ENCODE measurements at regions of chr7 and their contacts with region 1.

Region 1: GRCh38 chr7:25851332-25852210 is 300.4 kb upstream of the NFE2L3 start:
- DNase-seq: peak; percentile 96
- H3K4me3 Mint-ChIP-seq: peak overlapping the region; percentile 57
- H3K27ac Mint-ChIP-seq: peak overlapping the region; percentile 3
- H3K4me1 Mint-ChIP-seq: peaks cover 55% of the 10 kb centered on the region
- H3K27me3 Mint-ChIP-seq: peaks cover 28% of the 10 kb centered on the region
- CTCF ChIP-seq: peak; percentile 96

Region 2: GRCh38 chr7:25259587-25260243 is 591.9 kb before region 1 on chr7:
- CTCF ChIA-PET with region 1: interaction called, 6 read pairs
- intact Hi-C with region 1: loop called (anchors 1 kb)
- DNase-seq: peak; percentile 80
- H3K4me3 Mint-ChIP-seq: no peak overlapping the region
- H3K27ac Mint-ChIP-seq: no peak overlapping the region
- H3K4me1 Mint-ChIP-seq: peaks cover 37% of the 10 kb centered on the region
- H3K27me3 Mint-ChIP-seq: peaks cover 60% of the 10 kb centered on the region
- CTCF ChIP-seq: peak; percentile 93

Region 3: GRCh38 chr7:25565949-25566348 is 285.6 kb before region 1 on chr7:
- CTCF ChIA-PET with region 1: interaction called, 17 read pairs
- intact Hi-C with region 1: loop called (anchors 1 kb)
- DNase-seq: peak; percentile 70
- H3K4me3 Mint-ChIP-seq: no peak overlapping the region
- H3K27ac Mint-ChIP-seq: no peak overlapping the region
- H3K4me1 Mint-ChIP-seq: peaks cover 13% of the 10 kb centered on the region
- H3K27me3 Mint-ChIP-seq: peaks cover 43% of the 10 kb centered on the region
- CTCF ChIP-seq: peak; percentile 100

Region 4: DNA sequence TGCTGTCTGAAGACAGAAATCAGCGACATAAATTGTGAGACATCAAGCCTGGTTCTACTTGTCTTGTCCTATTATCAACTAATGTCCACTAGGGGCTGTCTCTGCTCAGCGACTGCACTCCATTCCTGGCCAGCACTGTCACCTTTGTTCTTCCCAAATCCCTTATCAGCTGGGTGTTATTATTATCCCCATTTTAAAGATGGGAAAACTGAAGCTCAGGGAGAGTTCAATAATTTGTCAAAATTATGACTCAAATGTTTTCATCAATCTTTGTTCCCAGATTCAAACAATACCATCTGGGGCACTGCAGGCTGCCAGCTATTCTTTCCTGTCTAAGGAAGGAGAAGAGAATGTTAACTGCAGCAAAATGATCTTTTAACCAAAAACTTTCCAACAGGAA is 131.1 kb before region 1 on chr7:
- CTCF ChIA-PET with region 1: interaction called, 8 read pairs
- intact Hi-C with region 1: loop called (anchors 1 kb)
- DNase-seq: no peak
- H3K4me3 Mint-ChIP-seq: no peak overlapping the region
- H3K27ac Mint-ChIP-seq: no peak overlapping the region
- H3K4me1 Mint-ChIP-seq: no peaks in the 10 kb centered on the region
- H3K27me3 Mint-ChIP-seq: peaks cover 47% of the 10 kb centered on the region
- CTCF ChIP-seq: peak; percentile 53

Region 5: DNA sequence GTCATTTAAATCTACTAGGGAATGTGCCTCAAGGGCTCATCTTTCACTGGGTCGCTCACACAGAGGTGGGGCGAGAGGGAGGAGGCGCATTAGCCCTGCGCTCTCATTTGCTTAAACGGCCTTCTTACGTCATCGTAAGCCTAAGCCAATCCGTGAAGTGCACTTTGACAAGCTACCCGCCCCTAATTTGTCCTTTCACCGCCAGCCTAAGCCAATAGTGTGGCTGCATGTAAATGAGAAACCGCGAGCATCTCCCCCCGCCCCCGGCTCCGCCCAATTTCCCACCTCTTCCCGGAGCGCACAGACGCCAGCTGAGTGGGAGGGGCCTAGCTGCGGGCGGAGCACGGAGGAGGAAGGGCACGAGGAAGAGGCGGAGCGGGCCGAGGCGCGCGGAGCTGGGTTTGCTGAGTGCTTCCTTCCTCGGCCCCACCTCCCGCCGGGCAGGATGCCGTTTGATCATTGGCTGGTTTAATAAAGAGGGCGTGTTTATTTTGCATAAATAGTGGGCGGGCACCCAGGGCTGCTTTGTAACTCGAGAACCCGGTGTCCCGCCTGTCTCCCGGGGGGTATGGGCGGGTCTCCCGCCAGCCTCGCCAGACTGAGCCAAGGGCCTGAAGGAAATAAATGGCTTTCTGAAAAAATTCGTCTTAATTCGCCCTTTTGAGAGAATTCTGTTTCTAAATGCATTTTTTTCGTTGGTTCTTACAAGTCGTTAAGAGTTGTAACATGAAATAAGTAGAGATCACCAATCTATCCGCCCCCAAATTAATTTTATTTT is 10.9 kb after region 1 on chr7:
- CTCF ChIA-PET with region 1: interaction called, 15 read pairs
- intact Hi-C with region 1: no loop called
- DNase-seq: peak; percentile 100
- H3K4me3 Mint-ChIP-seq: peak overlapping the region; percentile 68
- H3K27ac Mint-ChIP-seq: peak overlapping the region; percentile 82
- H3K4me1 Mint-ChIP-seq: no peaks in the 10 kb centered on the region
- H3K27me3 Mint-ChIP-seq: peaks cover 48% of the 10 kb centered on the region
- CTCF ChIP-seq: no peak